ENCODE measurements at regions of chr4 and their contacts with region 1.

Region 1: GRCh38 chr4:17324386-17324830 is 187.5 kb downstream of the QDPR start:
- DNase-seq: peak in 5 of 10 donors; percentile 31 to 82 (median 54)

Region 2: GRCh38 chr4:16516796-16517439 is 807.5 kb before region 1 on chr4:
- intact Hi-C with region 1: loop called (anchors 2 kb)
- DNase-seq: peak; percentile 39 to 95 (median 74)

Region 3: GRCh38 chr4:16626945-16627344 is 697.5 kb before region 1 on chr4:
- intact Hi-C with region 1: loop called (anchors 10 kb)
- DNase-seq: peak in 6 of 10 donors; percentile 16 to 83 (median 54)

Region 4: DNA sequence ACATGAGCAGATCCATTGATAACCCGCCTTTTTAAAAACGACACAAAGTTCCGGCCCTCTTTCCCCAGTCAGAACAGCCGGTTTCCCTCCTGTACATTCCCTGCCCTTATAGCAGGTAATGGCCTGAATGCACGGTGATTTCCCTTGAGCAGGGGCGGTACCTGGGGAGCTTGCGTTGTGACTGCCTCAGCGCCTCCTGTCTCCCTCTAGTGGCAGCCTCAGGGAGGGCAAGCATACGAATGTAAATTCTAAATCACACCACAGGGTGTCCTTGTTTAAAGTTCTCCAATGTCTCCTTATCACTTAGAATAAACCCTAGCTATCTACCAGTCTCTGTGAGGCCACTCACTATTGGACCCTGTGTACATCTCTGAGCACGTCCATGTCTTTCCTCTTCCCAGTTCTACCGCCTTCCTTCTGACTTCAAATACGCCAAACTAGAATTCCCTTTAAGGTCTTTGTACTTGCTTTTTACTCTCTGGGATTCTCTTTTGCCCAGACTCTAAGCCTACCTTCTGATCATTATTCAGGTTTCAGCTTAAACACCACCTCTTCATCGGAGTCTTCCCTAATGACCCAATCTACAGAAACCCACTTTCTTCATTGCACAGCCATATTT is 407.6 kb before region 1 on chr4:
- intact Hi-C with region 1: loop called (anchors 10 kb)
- DNase-seq: no peak

Region 5: GRCh38 chr4:17781300-17782287 is 457.2 kb after region 1 on chr4 and contains the start of gene FAM184B:
- intact Hi-C with region 1: no loop called
- DNase-seq: peak in 9 of 10 donors; percentile 16 to 89 (median 36)

Measured in posterior cingulate gyrus (tissue), 11 donors.